Heart left ventricle (tissue), 16 donors: ENCODE measurements at regions of chr22 and their contacts with region 1.

Region 1: DNA sequence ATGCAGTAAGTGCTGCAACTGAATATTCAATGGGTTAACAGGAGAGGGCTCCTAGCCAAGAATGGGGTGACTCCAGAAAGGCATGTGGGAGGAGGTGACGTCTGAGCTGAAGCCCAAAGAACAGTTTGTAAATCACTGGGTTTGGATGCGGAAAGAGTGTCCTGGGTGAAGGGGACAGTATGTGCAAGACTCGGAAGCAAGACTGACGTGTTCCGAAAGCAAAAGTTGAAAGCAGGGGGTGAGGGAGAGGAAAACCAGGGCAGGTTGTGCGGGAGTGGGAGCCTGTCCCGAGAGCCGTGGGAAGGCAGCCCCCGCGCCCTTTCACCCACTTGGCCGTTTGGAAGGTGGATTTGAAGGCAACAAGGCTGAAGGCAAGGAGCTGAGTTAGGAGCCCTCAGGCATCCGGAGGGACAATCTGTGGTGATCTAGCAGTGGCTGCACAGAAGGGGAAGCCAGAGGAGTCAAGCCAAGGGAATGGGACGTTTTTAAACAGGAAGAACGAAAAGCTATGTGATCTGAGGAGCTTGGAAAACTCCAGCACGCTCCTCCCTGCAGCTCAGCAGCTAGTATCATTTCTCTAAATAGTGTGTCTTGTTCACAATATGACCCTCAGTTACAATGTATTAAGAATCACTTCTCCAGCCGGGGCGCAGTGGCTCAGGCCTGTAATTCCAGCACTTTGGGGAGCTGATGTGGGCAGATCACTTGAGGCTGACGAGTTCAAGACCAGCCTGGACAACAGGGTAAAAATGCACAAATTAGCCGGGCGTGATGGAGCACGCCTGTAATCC is 7.7 kb downstream of the SLC25A18 start:
- DNase-seq: peak; percentile 70 to 96 (median 83)
- ATAC-seq: peak; percentile 93 to 95 (median 94)
- H3K4me3 ChIP-seq: peak overlapping the region in 10 of 12 donors; percentile 24 to 55 (median 46)
- H3K27ac ChIP-seq: peak overlapping the region; percentile 85 to 98 (median 91)
- H3K4me1 ChIP-seq: peaks cover 13 to 47% (median 23%) of the 10 kb centered on the region in 12 donors
- H3K27me3 ChIP-seq: no peaks in the 10 kb centered on the region
- CTCF ChIP-seq: no peak
- POLR2A ChIP-seq: peak in 1 of 2 donors; percentile 68

Region 2: GRCh38 chr22:17451316-17451715 is 119.7 kb before region 1 on chr22:
- intact Hi-C with region 1: no loop called
- DNase-seq: no peak
- ATAC-seq: no peak
- H3K4me3 ChIP-seq: no peak overlapping the region
- H3K27ac ChIP-seq: no peak overlapping the region
- H3K4me1 ChIP-seq: no peaks in the 10 kb centered on the region
- H3K27me3 ChIP-seq: no peaks in the 10 kb centered on the region
- CTCF ChIP-seq: no peak
- POLR2A ChIP-seq: no peak

Region 3: GRCh38 chr22:17597217-17597616 is 26.2 kb after region 1 on chr22:
- intact Hi-C with region 1: no loop called
- DNase-seq: no peak
- ATAC-seq: no peak
- H3K4me3 ChIP-seq: no peak overlapping the region
- H3K27ac ChIP-seq: peak overlapping the region in 1 of 12 donors; percentile 58
- H3K4me1 ChIP-seq: no peaks in the 10 kb centered on the region
- H3K27me3 ChIP-seq: no peaks in the 10 kb centered on the region
- CTCF ChIP-seq: no peak
- POLR2A ChIP-seq: no peak

Region 4: GRCh38 chr22:17638432-17639246 is 67.6 kb after region 1 on chr22 and contains the start of gene BCL2L13:
- intact Hi-C with region 1: loop called in 4 of 10 experiments (anchors 2 to 10 kb)
- DNase-seq: peak; percentile 92 to 96 (median 95)
- ATAC-seq: peak; percentile 95 to 98 (median 98)
- H3K4me3 ChIP-seq: peak within 1 kb of the TSS; percentile 66 to 97 (median 84)
- H3K27ac ChIP-seq: peak within 1 kb of the TSS; percentile 96 to 99 (median 98)
- H3K4me1 ChIP-seq: peaks cover 0 to 26% (median 15%) of the 10 kb centered on the region in 12 donors
- H3K27me3 ChIP-seq: no peaks in the 10 kb centered on the region
- CTCF ChIP-seq: peak in 3 of 12 donors; percentile 4 to 19 (median 10)
- POLR2A ChIP-seq: peak; percentile 93 to 95
- total RNA-seq, gene BCL2L13: 81.9 to 187 (median 89.7) TPM